AG04450 (cell line): ENCODE measurements at regions of chr6 and their contacts with region 1.

Region 1: GRCh38 chr6:39102071-39102820 is 12.7 kb downstream of the SAYSD1 start:
- DNase-seq: peak; percentile 49
- H3K4me3 ChIP-seq: no peak overlapping the region
- H3K27ac ChIP-seq: no peak overlapping the region
- H3K27me3 ChIP-seq: no peaks in the 10 kb centered on the region
- CTCF ChIP-seq: peak; percentile 58

Region 2: GRCh38 chr6:39114704-39115599 is 12.7 kb after region 1 on chr6 and contains the start of gene SAYSD1:
- CTCF ChIA-PET with region 1: interaction called, 14 read pairs
- POLR2A ChIA-PET with region 1: interaction called, 14 read pairs
- DNase-seq: peak; percentile 69
- H3K4me3 ChIP-seq: peak within 1 kb of the TSS; percentile 82
- H3K27ac ChIP-seq: peak within 1 kb of the TSS; percentile 91
- H3K27me3 ChIP-seq: no peaks in the 10 kb centered on the region
- CTCF ChIP-seq: no peak; the same call in 1 of the 2 replicates
- polyA plus RNA-seq, gene SAYSD1: 10.2 and 12.8 TPM in 2 replicates